ENCODE measurements at regions of chr9 and their contacts with region 1.

Region 1: GRCh38 chr9:116464987-116465571 is 222.0 kb upstream of the TRIM32 start:
- DNase-seq: no peak
- H3K4me3 ChIP-seq: no peak overlapping the region
- H3K27ac ChIP-seq: no peak overlapping the region
- H3K4me1 ChIP-seq: no peaks in the 10 kb centered on the region
- H3K27me3 ChIP-seq: no peaks in the 10 kb centered on the region
- CTCF ChIP-seq: no peak

Region 2: GRCh38 chr9:115211413-115212124 is 1253.5 kb before region 1 on chr9:
- intact Hi-C with region 1: loop called (anchors 10 kb)
- DNase-seq: no peak
- H3K4me3 ChIP-seq: no peak overlapping the region
- H3K27ac ChIP-seq: no peak overlapping the region
- H3K4me1 ChIP-seq: peaks cover 7% of the 10 kb centered on the region
- H3K27me3 ChIP-seq: peaks cover 12% of the 10 kb centered on the region
- CTCF ChIP-seq: no peak

Region 3: GRCh38 chr9:116524778-116525470 is 59.8 kb after region 1 on chr9:
- intact Hi-C with region 1: loop called (anchors 10 kb)
- DNase-seq: no peak
- H3K4me3 ChIP-seq: no peak overlapping the region
- H3K27ac ChIP-seq: no peak overlapping the region
- H3K4me1 ChIP-seq: no peaks in the 10 kb centered on the region
- H3K27me3 ChIP-seq: no peaks in the 10 kb centered on the region
- CTCF ChIP-seq: no peak